ENCODE measurements at regions of chr19 and their contacts with region 1.

Region 1: DNA sequence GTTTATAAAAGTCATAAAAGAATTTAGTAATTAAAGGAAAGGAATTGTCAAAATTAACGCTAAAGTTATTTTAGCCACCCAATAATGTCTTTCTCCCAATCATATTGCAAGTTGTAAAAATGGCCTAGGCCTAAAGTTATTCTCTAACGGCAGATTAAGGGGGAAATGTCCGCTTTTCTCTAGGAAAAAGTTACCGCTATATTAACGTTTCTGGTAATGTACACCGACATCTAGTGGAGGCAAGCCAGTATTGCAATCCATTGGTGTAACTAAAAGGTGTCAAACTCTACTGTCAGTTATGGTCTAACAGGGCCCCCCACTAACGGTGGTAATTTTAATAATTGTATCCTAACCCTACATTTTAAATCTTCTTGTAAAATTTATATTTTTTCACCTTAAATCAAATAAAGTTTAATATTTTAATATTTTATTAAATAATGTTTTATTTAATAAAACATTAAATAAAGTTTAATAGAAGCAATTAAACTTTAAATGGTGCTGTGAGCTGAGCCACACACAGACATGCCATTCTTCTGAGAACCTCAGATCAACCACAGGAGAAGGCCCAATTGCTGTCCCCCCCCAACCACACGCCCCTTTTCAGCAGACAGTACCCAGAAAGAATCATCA is 35.9 kb upstream of the ZSCAN5A start:
- DNase-seq: peak; percentile 46
- H3K4me3 Mint-ChIP-seq: no peak overlapping the region
- H3K27ac Mint-ChIP-seq: no peak overlapping the region
- H3K4me1 Mint-ChIP-seq: no peaks in the 10 kb centered on the region
- H3K27me3 Mint-ChIP-seq: no peaks in the 10 kb centered on the region

Region 2: GRCh38 chr19:56170261-56170660 is 180.3 kb before region 1 on chr19:
- CTCF ChIA-PET with region 1: no interaction called
- POLR2A ChIA-PET with region 1: no interaction called
- intact Hi-C with region 1: no loop called
- DNase-seq: no peak
- H3K4me3 Mint-ChIP-seq: no peak overlapping the region
- H3K27ac Mint-ChIP-seq: no peak overlapping the region
- H3K4me1 Mint-ChIP-seq: no peaks in the 10 kb centered on the region
- H3K27me3 Mint-ChIP-seq: peaks cover 7% of the 10 kb centered on the region

Region 3: DNA sequence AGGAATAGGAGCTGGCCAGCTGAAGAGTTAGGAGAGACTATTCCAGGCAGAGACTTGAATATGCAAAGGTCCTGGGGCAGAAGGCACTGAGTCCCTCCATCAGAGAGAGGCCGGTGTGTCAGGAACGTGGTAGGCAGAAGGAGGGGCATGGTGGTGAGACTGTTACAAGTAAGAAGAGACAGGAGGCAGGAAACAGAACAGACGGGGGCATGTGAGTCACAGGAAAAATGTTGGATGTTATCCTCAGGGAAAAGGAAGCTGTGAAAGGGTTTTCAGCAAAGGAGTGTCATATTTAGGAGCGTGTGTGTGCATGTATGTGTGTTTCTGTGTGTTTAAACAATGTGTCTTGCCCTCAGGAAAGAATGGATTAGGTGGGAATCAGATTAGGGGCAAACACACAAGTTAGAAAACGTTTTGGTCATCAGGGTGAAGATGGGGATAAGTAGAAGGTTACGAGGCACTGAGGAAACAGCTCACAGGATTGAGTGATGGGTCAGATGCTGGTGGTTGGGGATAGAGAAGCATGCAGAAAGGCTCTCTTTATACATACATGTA is 76.9 kb before region 1 on chr19:
- CTCF ChIA-PET with region 1: no interaction called
- POLR2A ChIA-PET with region 1: no interaction called
- intact Hi-C with region 1: no loop called
- DNase-seq: no peak
- H3K4me3 Mint-ChIP-seq: no peak overlapping the region
- H3K27ac Mint-ChIP-seq: no peak overlapping the region
- H3K4me1 Mint-ChIP-seq: no peaks in the 10 kb centered on the region
- H3K27me3 Mint-ChIP-seq: no peaks in the 10 kb centered on the region

Region 4: DNA sequence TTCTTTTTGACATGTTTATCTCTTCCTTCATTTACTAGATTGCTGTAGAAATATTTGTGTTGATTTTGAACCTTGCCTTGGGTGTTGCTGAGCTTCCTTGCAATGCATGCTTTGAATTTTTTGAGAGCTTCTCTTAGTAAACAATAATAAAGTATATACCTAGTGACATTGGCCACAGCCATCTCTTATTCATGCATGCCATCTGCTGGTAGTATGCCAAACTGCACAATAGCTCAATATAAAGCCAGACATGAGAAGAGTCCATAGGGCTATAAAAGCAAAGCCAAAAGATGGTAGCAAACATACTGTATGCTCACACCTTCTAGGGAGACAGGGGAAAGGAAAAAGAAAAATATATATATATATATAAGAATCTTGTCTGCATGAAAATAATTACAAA is 17.0 kb before region 1 on chr19:
- CTCF ChIA-PET with region 1: interaction called, 12 read pairs
- POLR2A ChIA-PET with region 1: no interaction called
- intact Hi-C with region 1: no loop called
- DNase-seq: peak; percentile 34
- H3K4me3 Mint-ChIP-seq: no peak overlapping the region
- H3K27ac Mint-ChIP-seq: no peak overlapping the region
- H3K4me1 Mint-ChIP-seq: no peaks in the 10 kb centered on the region
- H3K27me3 Mint-ChIP-seq: peaks cover 5% of the 10 kb centered on the region

Region 5: GRCh38 chr19:56367829-56368711 is 17.5 kb after region 1 on chr19:
- CTCF ChIA-PET with region 1: interaction called, 10 read pairs
- POLR2A ChIA-PET with region 1: no interaction called
- intact Hi-C with region 1: no loop called
- DNase-seq: peak; percentile 78
- H3K4me3 Mint-ChIP-seq: peak overlapping the region; percentile 77
- H3K27ac Mint-ChIP-seq: peak overlapping the region; percentile 30
- H3K4me1 Mint-ChIP-seq: peaks cover 17% of the 10 kb centered on the region
- H3K27me3 Mint-ChIP-seq: peaks cover 21% of the 10 kb centered on the region

Region 6: GRCh38 chr19:56423276-56423984 is 72.9 kb after region 1 on chr19:
- CTCF ChIA-PET with region 1: no interaction called
- POLR2A ChIA-PET with region 1: no interaction called
- intact Hi-C with region 1: no loop called
- DNase-seq: no peak
- H3K4me3 Mint-ChIP-seq: no peak overlapping the region
- H3K27ac Mint-ChIP-seq: no peak overlapping the region
- H3K4me1 Mint-ChIP-seq: no peaks in the 10 kb centered on the region
- H3K27me3 Mint-ChIP-seq: no peaks in the 10 kb centered on the region

Measured in activated CD4-positive, alpha-beta memory T cell treated with anti-CD3 and anti-CD28 coated beads for 36 hours (primary cell).